ENCODE measurements at regions of chr18 and their contacts with region 1.

Region 1: DNA sequence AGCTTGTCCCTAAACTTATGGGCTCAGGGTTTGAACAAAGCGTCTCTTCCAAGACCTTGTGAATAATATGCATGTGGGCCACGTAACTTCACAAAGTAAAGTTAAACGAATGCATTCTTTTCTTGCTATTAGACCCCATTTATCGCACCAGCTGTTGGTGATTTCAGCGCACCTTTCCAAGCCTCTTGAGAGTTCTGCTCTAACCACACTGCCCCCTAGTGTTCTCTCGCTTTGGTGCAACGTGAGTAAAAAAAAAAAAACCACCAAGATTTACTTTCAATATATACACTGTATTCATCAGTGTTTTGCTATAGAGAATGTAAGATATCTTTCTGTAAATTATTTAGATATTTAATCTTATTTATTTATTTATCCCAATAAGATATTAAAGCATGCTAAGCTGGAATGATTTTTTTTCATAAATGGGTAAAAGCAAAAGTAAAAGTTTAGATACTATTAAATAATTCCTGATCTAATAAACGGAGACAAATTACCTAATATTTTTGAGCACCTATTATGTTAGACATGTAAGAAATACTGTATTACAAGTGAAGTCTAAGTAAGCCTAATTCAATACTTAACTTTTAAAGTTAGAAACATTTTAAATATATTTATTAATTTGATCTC is 459.5 kb downstream of the DLGAP1 start:
- H3K4me3 ChIP-seq: no peak overlapping the region
- H3K27ac ChIP-seq: no peak overlapping the region
- H3K4me1 ChIP-seq: no peaks in the 10 kb centered on the region
- CTCF ChIP-seq: no peak; the same call in 1 of the 2 replicates

Region 2: DNA sequence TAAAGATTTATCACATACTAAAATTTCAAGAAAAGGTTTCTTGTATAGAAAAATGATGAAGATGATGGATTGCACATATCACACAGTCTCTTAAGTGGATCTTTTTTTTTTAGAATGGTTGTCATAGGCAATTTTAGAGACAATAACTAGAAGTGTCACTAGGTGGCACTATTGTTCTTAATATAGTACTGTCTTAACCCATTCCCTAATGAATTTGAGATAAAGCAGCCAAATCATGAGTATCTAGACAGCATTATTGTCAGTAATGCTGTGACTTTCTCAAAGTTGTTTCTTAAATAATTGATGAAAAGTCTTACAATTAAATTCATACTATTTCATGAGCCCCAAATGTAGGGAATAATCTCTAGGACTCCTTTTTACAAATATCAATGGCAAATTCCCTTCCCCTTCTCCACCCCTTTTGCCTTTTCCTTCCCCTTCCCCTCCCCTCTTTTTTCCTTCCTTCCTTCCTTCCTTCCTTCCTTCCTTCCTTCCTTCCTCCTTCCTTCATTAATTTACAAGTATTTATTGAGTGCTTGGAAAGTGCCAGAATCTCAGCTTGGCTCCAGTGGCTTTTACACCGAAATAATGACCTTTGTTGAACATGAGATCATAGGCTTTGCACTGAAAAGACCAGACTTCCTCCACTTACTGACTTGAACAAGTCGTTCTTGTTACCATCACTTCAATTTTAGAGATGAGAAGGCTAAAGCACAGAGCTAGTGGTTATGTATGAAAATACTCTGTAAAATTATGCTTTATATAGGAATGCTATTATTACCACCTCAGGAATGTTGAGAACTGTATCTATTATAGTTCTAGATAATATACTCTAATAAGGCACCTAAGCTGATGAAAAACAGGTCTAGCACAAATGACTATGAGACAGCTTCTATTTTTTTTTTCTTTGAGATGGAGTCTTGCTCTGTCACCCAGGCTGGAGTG is 713.9 kb before region 1 on chr18:
- CTCF ChIA-PET with region 1: interaction called, 10 read pairs
- POLR2A ChIA-PET with region 1: no interaction called
- H3K4me3 ChIP-seq: no peak overlapping the region
- H3K27ac ChIP-seq: no peak overlapping the region
- H3K4me1 ChIP-seq: no peaks in the 10 kb centered on the region
- CTCF ChIP-seq: peak; percentile 36; the same call in 1 of the 2 replicates

Region 3: DNA sequence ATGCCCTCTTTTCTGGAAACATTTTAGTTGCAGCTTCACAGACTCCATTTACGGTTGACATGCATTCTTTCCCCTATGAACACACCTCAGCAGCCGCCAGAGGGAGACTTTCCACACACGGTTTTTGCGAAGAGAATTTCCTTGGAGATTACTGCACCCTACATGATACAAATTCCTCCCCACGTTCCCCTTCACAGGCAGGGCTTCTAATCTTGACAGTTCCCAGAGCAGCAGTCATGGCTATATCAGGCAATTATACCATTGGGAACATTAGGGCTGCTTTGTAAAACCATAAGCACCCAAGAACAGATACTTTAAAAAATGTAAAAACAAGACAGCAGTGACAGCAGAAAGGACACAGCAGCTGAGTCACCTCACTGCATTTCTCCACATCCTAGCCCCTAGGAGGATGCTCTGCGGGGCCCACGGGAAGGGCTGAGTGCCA is 291.8 kb before region 1 on chr18:
- CTCF ChIA-PET with region 1: interaction called, 27 read pairs
- POLR2A ChIA-PET with region 1: no interaction called
- H3K4me3 ChIP-seq: no peak overlapping the region
- H3K27ac ChIP-seq: no peak overlapping the region
- H3K4me1 ChIP-seq: no peaks in the 10 kb centered on the region
- CTCF ChIP-seq: peak; percentile 77

Region 4: GRCh38 chr18:3877678-3878077 is 117.9 kb before region 1 on chr18:
- CTCF ChIA-PET with region 1: interaction called, 14 read pairs
- POLR2A ChIA-PET with region 1: no interaction called
- H3K4me3 ChIP-seq: no peak overlapping the region
- H3K27ac ChIP-seq: no peak overlapping the region
- H3K4me1 ChIP-seq: peaks cover 9% of the 10 kb centered on the region
- CTCF ChIP-seq: no peak

Region 5: GRCh38 chr18:3966985-3967856 is 28.4 kb before region 1 on chr18:
- CTCF ChIA-PET with region 1: interaction called, 13 read pairs
- POLR2A ChIA-PET with region 1: no interaction called
- H3K4me3 ChIP-seq: no peak overlapping the region
- H3K27ac ChIP-seq: peak overlapping the region; percentile 76
- H3K4me1 ChIP-seq: peaks cover 17% of the 10 kb centered on the region
- CTCF ChIP-seq: no peak

Region 6: DNA sequence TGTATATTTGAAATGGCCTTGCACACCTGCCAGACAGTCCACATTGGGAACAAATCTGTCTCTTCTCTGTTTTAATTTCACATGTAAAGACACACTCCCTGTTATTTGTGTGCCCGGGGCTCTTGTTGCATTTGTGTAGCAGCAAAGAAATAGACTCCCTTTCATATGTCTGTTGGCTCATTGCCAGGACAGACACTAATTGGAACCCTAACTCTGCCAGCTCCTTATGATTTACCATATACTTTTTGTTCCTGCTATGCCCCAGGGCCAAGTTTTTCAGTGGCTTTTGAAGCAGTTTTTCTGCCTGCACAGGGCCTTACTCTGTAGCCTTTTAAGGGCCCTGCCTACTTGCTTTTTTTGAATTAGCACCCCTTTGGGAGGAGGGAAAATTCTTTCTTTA is 62.6 kb after region 1 on chr18:
- CTCF ChIA-PET with region 1: no interaction called
- POLR2A ChIA-PET with region 1: no interaction called
- H3K4me3 ChIP-seq: no peak overlapping the region
- H3K27ac ChIP-seq: no peak overlapping the region
- H3K4me1 ChIP-seq: no peaks in the 10 kb centered on the region
- CTCF ChIP-seq: no peak

Region 7: DNA sequence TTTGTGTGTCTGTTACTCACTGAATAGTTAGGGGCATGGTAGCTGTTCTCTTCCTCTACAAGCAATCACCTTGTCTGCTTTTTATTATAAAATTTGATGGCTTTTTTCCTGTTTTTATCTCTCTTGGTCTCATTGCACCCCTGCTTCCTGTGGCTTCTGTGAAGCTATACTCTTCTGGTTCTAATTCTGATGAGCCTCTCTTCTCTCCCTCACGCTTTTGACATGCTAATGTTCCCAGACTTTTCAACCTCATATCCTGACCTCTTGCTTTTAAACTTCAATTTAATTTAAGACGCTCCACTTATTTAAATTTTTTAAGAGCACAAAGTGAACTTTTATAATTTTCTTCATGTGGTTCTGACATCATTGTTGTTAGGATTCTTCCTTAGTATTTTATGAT is 98.1 kb after region 1 on chr18:
- CTCF ChIA-PET with region 1: no interaction called
- POLR2A ChIA-PET with region 1: no interaction called
- H3K4me3 ChIP-seq: no peak overlapping the region
- H3K27ac ChIP-seq: no peak overlapping the region
- H3K4me1 ChIP-seq: peaks cover 7% of the 10 kb centered on the region; the same call in 1 of the 2 replicates
- CTCF ChIP-seq: no peak

Measured in HEK293 (cell line).